ENCODE measurements at regions of chr4 and their contacts with region 1.

Region 1: GRCh38 chr4:155953151-155954114 is at the start of gene CTSO:
- DNase-seq: peak; percentile 48
- ATAC-seq: peak; percentile 96
- H3K4me3 ChIP-seq: peak within 1 kb of the TSS; percentile 77
- H3K27ac ChIP-seq: peak within 1 kb of the TSS; percentile 89
- H3K4me1 ChIP-seq: no peaks in the 10 kb centered on the region
- H3K27me3 ChIP-seq: no peaks in the 10 kb centered on the region
- CTCF ChIP-seq: peak; percentile 46 to 69 (median 53); a peak in 5 of 6 replicates
- EP300 ChIP-seq: no peak
- POLR2A ChIP-seq: peak; percentile 94
- RAD21 ChIP-seq: peak; percentile 65
- polyA plus RNA-seq, gene CTSO: 3.9 to 4.6 TPM

Region 2: GRCh38 chr4:155529272-155529671 is 424.2 kb before region 1 on chr4:
- CTCF ChIA-PET with region 1: interaction called, 26 read pairs
- POLR2A ChIA-PET with region 1: interaction called, 3 read pairs
- RAD21 ChIA-PET with region 1: interaction called, 18 read pairs
- SMC1A ChIA-PET with region 1: interaction called, 4 read pairs
- in situ Hi-C with region 1: no loop called
- intact Hi-C with region 1: no loop called
- DNase-seq: no peak
- ATAC-seq: peak; percentile 71
- H3K4me3 ChIP-seq: no peak overlapping the region
- H3K27ac ChIP-seq: no peak overlapping the region
- H3K4me1 ChIP-seq: no peaks in the 10 kb centered on the region
- H3K27me3 ChIP-seq: peaks cover 0 to 3% of the 10 kb centered on the region in 2 experiments; a peak in 1 of 4 replicates
- CTCF ChIP-seq: peak; percentile 13 to 55 (median 20); a peak in 3 of 6 replicates
- EP300 ChIP-seq: no peak
- POLR2A ChIP-seq: no peak
- RAD21 ChIP-seq: peak; percentile 51

Region 3: GRCh38 chr4:155787113-155787710 is 166.2 kb before region 1 on chr4:
- CTCF ChIA-PET with region 1: interaction called, 12 read pairs
- POLR2A ChIA-PET with region 1: interaction called, 5 read pairs
- RAD21 ChIA-PET with region 1: interaction called, 10 read pairs
- SMC1A ChIA-PET with region 1: interaction called, 13 read pairs
- in situ Hi-C with region 1: no loop called
- intact Hi-C with region 1: no loop called
- DNase-seq: peak; percentile 19
- ATAC-seq: peak; percentile 97
- H3K4me3 ChIP-seq: no peak overlapping the region
- H3K27ac ChIP-seq: no peak overlapping the region
- H3K4me1 ChIP-seq: no peaks in the 10 kb centered on the region
- H3K27me3 ChIP-seq: no peaks in the 10 kb centered on the region
- CTCF ChIP-seq: peak; percentile 81 to 98 (median 90)
- EP300 ChIP-seq: no peak
- POLR2A ChIP-seq: no peak
- RAD21 ChIP-seq: peak; percentile 93

Region 4: DNA sequence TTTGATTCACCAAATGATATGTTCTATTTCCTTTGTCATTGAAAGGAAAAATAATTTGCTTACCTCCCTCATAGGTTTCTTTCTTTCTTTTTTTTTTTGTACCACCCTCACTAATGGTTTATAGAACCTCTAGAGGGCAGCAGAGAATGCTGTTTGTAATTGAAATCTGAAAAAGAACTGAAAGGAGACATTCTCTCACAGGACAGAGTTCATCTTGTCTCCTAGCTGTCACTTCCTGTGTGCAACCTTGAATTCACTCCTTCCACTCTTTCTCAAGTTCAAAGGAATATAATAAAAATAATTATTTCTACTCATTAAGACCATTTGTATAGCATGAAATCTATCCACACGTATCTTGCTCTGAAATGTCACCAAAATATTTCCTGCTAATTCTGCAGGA is 143.6 kb before region 1 on chr4:
- CTCF ChIA-PET with region 1: interaction called, 186 read pairs
- POLR2A ChIA-PET with region 1: interaction called, 21 read pairs
- RAD21 ChIA-PET with region 1: interaction called, 113 read pairs
- SMC1A ChIA-PET with region 1: interaction called, 110 read pairs
- in situ Hi-C with region 1: loop called (anchors 5 kb)
- intact Hi-C with region 1: loop called (anchors 1 kb)
- DNase-seq: peak; percentile 55
- ATAC-seq: peak; percentile 99
- H3K4me3 ChIP-seq: no peak overlapping the region
- H3K27ac ChIP-seq: no peak overlapping the region
- H3K4me1 ChIP-seq: no peaks in the 10 kb centered on the region
- H3K27me3 ChIP-seq: no peaks in the 10 kb centered on the region
- CTCF ChIP-seq: peak; percentile 40 to 69 (median 54); a peak in 5 of 6 replicates
- EP300 ChIP-seq: no peak
- POLR2A ChIP-seq: no peak
- RAD21 ChIP-seq: peak; percentile 81

Region 5: DNA sequence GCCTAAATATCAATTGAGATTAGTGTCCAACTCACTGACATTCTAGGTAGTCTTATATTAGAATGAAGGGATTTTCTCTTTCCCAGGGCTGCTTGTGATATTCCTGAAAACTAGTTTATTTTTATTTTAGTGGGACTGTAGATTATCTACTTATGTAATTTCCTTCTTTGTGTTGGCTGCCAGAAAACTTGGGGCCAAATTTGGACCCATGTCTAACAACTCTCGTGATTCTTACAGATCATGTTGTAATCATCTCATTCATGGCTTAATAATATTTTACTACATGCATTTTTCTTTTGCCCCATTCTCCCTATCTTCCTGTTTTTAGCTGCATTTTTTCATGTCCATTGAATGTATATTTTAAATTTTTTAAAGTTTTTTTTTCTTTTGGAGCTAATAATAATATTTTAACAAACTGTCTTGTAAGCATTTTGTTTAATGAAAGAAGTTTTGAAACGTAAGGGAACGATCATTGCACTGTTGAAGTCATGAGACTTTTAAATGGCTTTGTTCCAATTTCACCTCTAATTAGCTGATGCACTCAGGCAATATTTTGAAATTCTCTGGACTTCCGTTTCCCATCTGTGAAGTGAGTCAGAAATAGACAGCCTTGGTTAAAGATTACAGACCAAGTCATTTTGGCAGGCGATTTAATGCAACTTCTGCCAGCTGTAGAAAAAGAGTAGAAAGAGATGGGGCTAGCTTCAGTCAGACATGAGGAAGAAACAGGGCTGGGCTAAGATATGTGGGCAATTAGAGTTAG is 64.2 kb before region 1 on chr4:
- CTCF ChIA-PET with region 1: interaction called, 5 read pairs
- POLR2A ChIA-PET with region 1: interaction called, 3 read pairs
- RAD21 ChIA-PET with region 1: interaction called, 12 read pairs
- SMC1A ChIA-PET with region 1: interaction called, 4 read pairs
- in situ Hi-C with region 1: no loop called
- intact Hi-C with region 1: no loop called
- DNase-seq: peak; percentile 58
- ATAC-seq: peak; percentile 98
- H3K4me3 ChIP-seq: no peak overlapping the region
- H3K27ac ChIP-seq: no peak overlapping the region
- H3K4me1 ChIP-seq: no peaks in the 10 kb centered on the region
- H3K27me3 ChIP-seq: no peaks in the 10 kb centered on the region
- CTCF ChIP-seq: no peak
- EP300 ChIP-seq: peak in 1 of 2 experiments; percentile 66; a peak in 1 of 4 replicates
- POLR2A ChIP-seq: no peak
- RAD21 ChIP-seq: no peak

Region 6: DNA sequence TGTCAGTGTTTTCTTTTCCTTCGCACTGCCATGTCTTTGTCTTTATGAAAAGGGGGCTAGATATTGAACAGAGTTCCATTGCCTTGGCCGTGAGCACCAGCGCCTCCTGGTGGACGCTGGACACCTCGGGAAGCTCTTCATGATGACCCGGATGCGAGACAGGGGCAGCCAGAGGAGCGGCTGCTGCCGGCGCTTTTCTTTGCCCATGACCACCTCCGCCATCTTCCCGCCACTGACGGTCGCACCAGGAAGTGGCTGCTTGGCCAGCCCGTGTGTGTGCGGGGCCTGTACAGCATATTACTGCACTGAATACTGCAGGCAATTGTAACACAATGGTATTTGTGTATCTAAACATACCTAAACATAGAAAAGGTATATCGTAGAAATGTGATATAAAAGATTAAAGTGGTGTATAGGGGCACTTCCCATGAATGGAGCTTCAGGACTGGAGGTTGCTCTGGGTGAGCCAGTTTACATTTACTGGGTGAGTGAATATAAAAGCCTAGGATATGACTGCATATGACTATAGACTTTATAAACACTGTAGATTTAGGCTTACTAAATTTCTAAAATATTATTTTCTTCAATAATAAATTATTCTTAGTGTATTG is 1251.3 kb after region 1 on chr4:
- CTCF ChIA-PET with region 1: no interaction called
- POLR2A ChIA-PET with region 1: no interaction called
- RAD21 ChIA-PET with region 1: no interaction called
- SMC1A ChIA-PET with region 1: no interaction called
- in situ Hi-C with region 1: no loop called
- intact Hi-C with region 1: loop called (anchors 10 kb)
- DNase-seq: no peak
- ATAC-seq: peak; percentile 84
- H3K4me3 ChIP-seq: no peak overlapping the region
- H3K27ac ChIP-seq: no peak overlapping the region
- H3K4me1 ChIP-seq: no peaks in the 10 kb centered on the region
- H3K27me3 ChIP-seq: no peaks in the 10 kb centered on the region
- CTCF ChIP-seq: peak; percentile 53 to 72 (median 68)
- EP300 ChIP-seq: no peak
- POLR2A ChIP-seq: no peak
- RAD21 ChIP-seq: peak; percentile 55

Measured in GM12878 (cell line).